CD4-positive, alpha-beta memory T cell (primary cell): ENCODE measurements at regions of chr17 and their contacts with region 1.

Region 1: GRCh38 chr17:35540589-35541404 is 3.3 kb upstream of the SLFN12L start:
- DNase-seq: peak in 4 of 5 donors; percentile 43 to 54 (median 50)
- H3K4me3 ChIP-seq: peak overlapping the region; percentile 60 to 79
- H3K4me3 Mint-ChIP-seq: peak overlapping the region; percentile 87 to 98 (median 92)
- H3K27ac ChIP-seq: peak overlapping the region; percentile 74
- H3K27ac Mint-ChIP-seq: peak overlapping the region; percentile 80 to 98 (median 95)
- H3K4me1 ChIP-seq: peaks cover 45% of the 10 kb centered on the region
- H3K4me1 Mint-ChIP-seq: peaks cover 32 to 62% (median 45%) of the 10 kb centered on the region in 4 donors
- H3K27me3 ChIP-seq: no peaks in the 10 kb centered on the region
- H3K27me3 Mint-ChIP-seq: no peaks in the 10 kb centered on the region

Region 2: GRCh38 chr17:35170968-35171771 is 369.6 kb before region 1 on chr17:
- CTCF ChIA-PET with region 1: interaction called, 111 read pairs
- POLR2A ChIA-PET with region 1: interaction called, 117 read pairs
- intact Hi-C with region 1: loop called (anchors 1 kb)
- DNase-seq: peak; percentile 41 to 75 (median 72)
- H3K4me3 ChIP-seq: peak overlapping the region in 1 of 2 donors; percentile 18
- H3K4me3 Mint-ChIP-seq: peak overlapping the region; percentile 51 to 81 (median 68)
- H3K27ac ChIP-seq: no peak overlapping the region
- H3K27ac Mint-ChIP-seq: peak overlapping the region; percentile 82 to 93 (median 91)
- H3K4me1 ChIP-seq: peaks cover 41% of the 10 kb centered on the region
- H3K4me1 Mint-ChIP-seq: peaks cover 32 to 60% (median 42%) of the 10 kb centered on the region in 4 donors
- H3K27me3 ChIP-seq: no peaks in the 10 kb centered on the region
- H3K27me3 Mint-ChIP-seq: no peaks in the 10 kb centered on the region

Region 3: DNA sequence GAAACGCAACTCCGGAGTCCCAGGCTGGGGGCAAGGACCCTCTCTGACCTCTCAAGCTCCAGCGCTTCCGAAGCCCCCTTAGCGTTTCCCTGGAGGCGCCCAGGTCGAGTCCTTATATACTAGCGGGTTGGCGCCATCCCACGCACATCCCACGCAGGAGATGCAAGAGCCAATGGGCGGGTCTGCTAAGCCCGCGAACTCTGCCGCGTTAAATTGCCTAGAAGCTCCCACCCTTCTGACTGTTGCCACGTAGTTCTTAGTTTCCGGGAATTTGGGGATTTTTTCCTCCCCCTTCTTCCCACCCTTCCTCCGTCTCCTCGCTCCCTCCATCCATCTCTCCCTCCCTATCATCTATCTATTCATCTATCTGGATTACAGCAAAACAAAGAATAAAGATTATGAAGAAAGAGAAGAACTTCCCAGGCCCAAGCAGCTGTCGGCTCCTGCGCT is 167.2 kb before region 1 on chr17 and contains the start of gene SLFN11:
- CTCF ChIA-PET with region 1: interaction called, 19 read pairs
- POLR2A ChIA-PET with region 1: interaction called, 110 read pairs
- intact Hi-C with region 1: loop called (anchors 2 kb)
- DNase-seq: peak; percentile 83 to 91 (median 83)
- H3K4me3 ChIP-seq: peak within 1 kb of the TSS; percentile 54 to 85
- H3K4me3 Mint-ChIP-seq: peak within 1 kb of the TSS; percentile 96 to 100 (median 99)
- H3K27ac ChIP-seq: peak within 1 kb of the TSS; percentile 98
- H3K27ac Mint-ChIP-seq: peak within 1 kb of the TSS; percentile 99 to 100 (median 100)
- H3K4me1 ChIP-seq: peaks cover 45% of the 10 kb centered on the region
- H3K4me1 Mint-ChIP-seq: peaks cover 32 to 71% (median 50%) of the 10 kb centered on the region in 4 donors
- H3K27me3 ChIP-seq: no peaks in the 10 kb centered on the region
- H3K27me3 Mint-ChIP-seq: no peaks in the 10 kb centered on the region
- total RNA-seq, gene SLFN11: 72.4 to 74.2 TPM

Region 4: DNA sequence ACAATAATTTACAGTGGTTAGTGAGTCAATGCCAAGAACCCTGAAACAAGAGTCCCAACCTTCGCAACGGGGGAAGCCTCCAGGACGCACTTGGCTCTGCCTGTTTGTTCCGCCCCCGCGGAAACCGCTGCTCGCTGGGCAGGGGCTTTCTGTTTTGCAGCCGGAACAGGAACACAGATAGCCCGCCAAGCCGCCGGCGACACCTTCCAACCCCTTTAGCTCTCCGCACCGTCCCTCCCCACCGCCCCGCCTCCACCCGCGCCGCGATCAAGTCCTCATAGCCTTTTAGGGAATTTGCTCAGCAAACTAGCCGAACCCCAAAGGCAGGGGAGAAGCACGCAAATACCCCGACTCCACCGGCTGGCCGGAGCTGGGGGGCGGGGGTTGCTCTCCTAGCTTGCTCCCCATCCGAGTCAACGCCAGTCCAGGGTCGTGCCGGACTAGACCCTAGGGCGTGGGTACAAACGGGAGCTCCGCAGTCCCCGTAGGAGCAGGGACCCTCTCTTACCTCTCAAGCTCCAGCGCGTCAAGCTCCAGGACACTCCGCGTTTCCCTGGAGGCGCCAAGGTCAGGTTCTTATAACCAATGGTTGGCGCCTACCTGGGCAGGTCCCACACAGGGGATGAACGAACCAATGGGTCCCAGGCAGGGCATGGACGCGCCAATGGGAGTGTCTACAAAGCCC is 92.4 kb before region 1 on chr17 and contains the start of gene SLFN13:
- CTCF ChIA-PET with region 1: no interaction called
- POLR2A ChIA-PET with region 1: interaction called, 13 read pairs
- intact Hi-C with region 1: no loop called
- DNase-seq: peak; percentile 80 to 92 (median 81)
- H3K4me3 ChIP-seq: peak within 1 kb of the TSS; percentile 1 to 62
- H3K4me3 Mint-ChIP-seq: peak within 1 kb of the TSS; percentile 85 to 92 (median 88)
- H3K27ac ChIP-seq: peak within 1 kb of the TSS; percentile 55
- H3K27ac Mint-ChIP-seq: peak within 1 kb of the TSS; percentile 78 to 95 (median 89)
- H3K4me1 ChIP-seq: peaks cover 8% of the 10 kb centered on the region
- H3K4me1 Mint-ChIP-seq: peaks cover 6 to 18% (median 11%) of the 10 kb centered on the region in 4 donors
- H3K27me3 ChIP-seq: no peaks in the 10 kb centered on the region
- H3K27me3 Mint-ChIP-seq: no peaks in the 10 kb centered on the region
- total RNA-seq, gene SLFN13: 24.6 to 27.3 TPM

Region 5: DNA sequence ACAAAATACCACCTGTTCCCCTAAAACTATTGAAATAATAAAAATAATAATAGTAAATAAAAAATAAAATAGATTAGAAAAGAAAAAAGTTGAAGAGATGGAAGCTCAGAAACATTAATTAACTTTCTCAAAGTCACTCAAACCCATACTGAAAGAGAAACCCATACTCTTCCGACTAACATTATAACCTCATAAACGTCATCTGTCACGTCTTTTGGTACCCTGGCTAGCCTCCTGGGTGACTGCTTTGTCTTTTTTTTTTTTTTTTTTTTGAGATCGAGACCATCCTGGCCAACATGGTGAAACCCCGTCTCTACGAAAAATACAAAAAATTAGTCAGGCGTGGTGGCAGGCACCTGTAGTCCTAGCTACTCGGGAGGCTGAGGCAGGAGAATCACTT is 10.9 kb before region 1 on chr17:
- CTCF ChIA-PET with region 1: interaction called, 107 read pairs
- POLR2A ChIA-PET with region 1: interaction called, 208 read pairs
- intact Hi-C with region 1: no loop called
- DNase-seq: no peak
- H3K4me3 ChIP-seq: no peak overlapping the region
- H3K4me3 Mint-ChIP-seq: peak overlapping the region in 7 of 8 donors; percentile 24 to 83 (median 65)
- H3K27ac ChIP-seq: no peak overlapping the region
- H3K27ac Mint-ChIP-seq: peak overlapping the region; percentile 26 to 93 (median 72)
- H3K4me1 ChIP-seq: peaks cover 70% of the 10 kb centered on the region
- H3K4me1 Mint-ChIP-seq: peaks cover 61 to 85% (median 73%) of the 10 kb centered on the region in 4 donors
- H3K27me3 ChIP-seq: no peaks in the 10 kb centered on the region
- H3K27me3 Mint-ChIP-seq: no peaks in the 10 kb centered on the region

Region 6: DNA sequence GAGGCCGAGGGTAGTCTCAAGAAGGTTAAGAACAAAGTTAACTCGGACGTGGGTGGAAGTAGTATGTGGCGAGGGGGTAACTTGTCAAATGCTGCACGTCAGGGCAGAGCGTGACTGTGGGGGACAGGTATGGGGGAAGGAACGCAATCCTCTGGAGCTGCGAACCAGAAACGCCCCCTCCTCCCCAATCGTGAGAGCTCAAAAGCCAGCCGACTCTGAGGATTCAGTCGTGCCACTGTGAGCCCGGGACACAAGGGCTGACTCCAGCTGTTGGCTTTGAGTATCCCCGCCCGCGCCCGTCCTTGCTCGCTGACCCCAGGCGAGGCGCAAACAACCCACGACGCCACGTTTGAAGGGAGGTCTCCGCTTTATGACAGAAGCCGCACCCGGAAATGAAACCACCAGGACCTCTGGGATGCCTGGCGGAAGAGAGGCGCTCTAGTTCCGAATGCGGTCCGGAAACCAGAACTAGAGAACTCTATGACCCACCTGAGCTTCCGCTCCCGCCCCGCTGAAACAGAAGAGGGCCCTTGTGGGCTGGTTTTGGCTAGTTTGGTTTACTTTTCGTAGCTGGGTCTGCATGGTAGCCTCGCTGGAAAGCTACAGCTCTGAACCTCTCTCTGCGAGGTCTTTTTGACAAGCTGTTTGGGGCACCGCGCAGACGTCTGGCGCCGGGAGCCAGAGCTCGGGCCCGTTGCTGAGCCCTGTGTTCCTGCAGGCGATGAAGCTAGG is 37.6 kb after region 1 on chr17 and contains the start of gene PEX12:
- CTCF ChIA-PET with region 1: interaction called, 5 read pairs
- POLR2A ChIA-PET with region 1: interaction called, 54 read pairs
- intact Hi-C with region 1: loop called (anchors 2 kb)
- DNase-seq: peak; percentile 87 to 95 (median 91)
- H3K4me3 ChIP-seq: peak within 1 kb of the TSS; percentile 81 to 90
- H3K4me3 Mint-ChIP-seq: peak within 1 kb of the TSS; percentile 95 to 99 (median 97)
- H3K27ac ChIP-seq: peak within 1 kb of the TSS; percentile 89
- H3K27ac Mint-ChIP-seq: peak within 1 kb of the TSS; percentile 97 to 100 (median 99)
- H3K4me1 ChIP-seq: peaks cover 24% of the 10 kb centered on the region
- H3K4me1 Mint-ChIP-seq: peaks cover 6 to 34% (median 26%) of the 10 kb centered on the region in 4 donors
- H3K27me3 ChIP-seq: no peaks in the 10 kb centered on the region
- H3K27me3 Mint-ChIP-seq: no peaks in the 10 kb centered on the region
- total RNA-seq, gene PEX12: 8.2 to 8.5 TPM

Region 7: DNA sequence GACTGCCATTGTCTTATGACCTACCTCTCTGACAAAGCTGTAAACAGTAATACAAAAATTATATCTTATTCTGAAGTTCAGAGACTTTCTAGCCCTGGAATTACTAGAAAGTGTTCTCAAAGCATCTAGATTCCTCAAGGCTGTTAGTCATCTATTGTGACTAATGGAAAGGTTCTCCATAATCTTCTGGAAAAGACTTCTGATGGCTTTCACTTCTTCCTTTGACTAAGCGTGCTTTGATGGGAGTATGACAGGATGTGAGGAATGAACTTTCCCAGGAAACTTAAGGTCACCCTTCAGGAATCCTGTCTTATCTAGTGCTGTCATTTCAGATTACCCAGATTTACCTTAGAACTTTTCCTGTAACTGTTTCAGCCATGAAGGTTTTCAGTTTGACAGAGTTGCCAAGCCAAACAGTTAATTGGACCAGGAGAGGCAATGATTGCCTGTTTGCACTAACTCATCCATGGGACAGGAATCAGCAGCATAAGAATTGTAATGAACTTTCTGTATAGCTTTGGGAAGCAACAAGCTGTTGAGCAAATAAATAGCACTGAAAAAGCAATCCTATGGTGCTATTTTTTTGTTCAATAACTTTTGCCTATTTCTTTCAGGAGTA is 89.8 kb after region 1 on chr17:
- CTCF ChIA-PET with region 1: no interaction called
- POLR2A ChIA-PET with region 1: no interaction called
- intact Hi-C with region 1: no loop called
- DNase-seq: no peak
- H3K4me3 ChIP-seq: no peak overlapping the region
- H3K4me3 Mint-ChIP-seq: no peak overlapping the region
- H3K27ac ChIP-seq: no peak overlapping the region
- H3K27ac Mint-ChIP-seq: peak overlapping the region in 2 of 7 donors; percentile 36 to 37
- H3K4me1 ChIP-seq: no peaks in the 10 kb centered on the region
- H3K4me1 Mint-ChIP-seq: peaks cover 0 to 5% (median 3%) of the 10 kb centered on the region in 4 donors
- H3K27me3 ChIP-seq: no peaks in the 10 kb centered on the region
- H3K27me3 Mint-ChIP-seq: no peaks in the 10 kb centered on the region

Region 8: GRCh38 chr17:35645923-35646322 is 105.1 kb after region 1 on chr17:
- CTCF ChIA-PET with region 1: no interaction called
- POLR2A ChIA-PET with region 1: no interaction called
- intact Hi-C with region 1: no loop called
- DNase-seq: no peak
- H3K4me3 ChIP-seq: no peak overlapping the region
- H3K4me3 Mint-ChIP-seq: no peak overlapping the region
- H3K27ac ChIP-seq: no peak overlapping the region
- H3K27ac Mint-ChIP-seq: no peak overlapping the region
- H3K4me1 ChIP-seq: no peaks in the 10 kb centered on the region
- H3K4me1 Mint-ChIP-seq: peaks cover 0 to 5% (median under 1%) of the 10 kb centered on the region in 4 donors
- H3K27me3 ChIP-seq: no peaks in the 10 kb centered on the region
- H3K27me3 Mint-ChIP-seq: no peaks in the 10 kb centered on the region